ENCODE measurements at regions of chr12 and their contacts with region 1.

Region 1: DNA sequence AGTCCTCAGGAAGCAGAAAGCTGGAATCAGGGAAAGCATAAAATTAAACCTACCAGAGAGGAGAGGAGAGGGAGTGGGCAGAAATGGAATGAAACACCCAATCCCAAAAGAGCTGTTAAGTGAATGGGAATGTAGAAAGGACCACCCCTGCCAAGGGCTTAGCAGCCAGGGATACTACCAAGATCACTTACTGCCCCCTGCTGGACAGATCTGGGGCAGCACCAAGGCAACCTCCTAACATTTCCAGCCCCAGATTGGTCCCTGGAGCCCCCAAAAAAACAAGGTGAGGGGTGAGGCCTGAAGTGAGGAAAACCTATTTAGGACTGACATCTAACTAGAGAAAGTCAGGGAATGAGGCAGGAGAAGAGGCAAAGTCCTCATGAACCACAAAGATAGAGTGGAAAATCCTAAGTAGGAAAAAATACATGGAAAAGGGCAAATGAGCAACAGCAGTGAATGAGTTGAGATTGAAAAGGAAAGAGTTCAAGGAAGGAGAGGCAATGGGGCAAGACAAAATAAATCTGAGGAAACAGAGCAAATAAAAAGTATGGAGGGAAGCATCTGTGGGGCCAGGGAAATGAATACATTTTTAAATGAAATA is 11.2 kb upstream of the FKBP11 start:
- DNase-seq: peak; percentile 86 to 92
- ATAC-seq: peak; percentile 32 to 58 (median 40)
- H3K4me3 ChIP-seq: no peak overlapping the region
- H3K4me3 Mint-ChIP-seq: peak overlapping the region; percentile 40
- H3K27ac ChIP-seq: no peak overlapping the region
- H3K27ac Mint-ChIP-seq: peak overlapping the region; percentile 95 to 98
- H3K4me1 ChIP-seq: peaks cover 51% of the 10 kb centered on the region
- H3K4me1 Mint-ChIP-seq: peaks cover 45% of the 10 kb centered on the region in 2 donors
- H3K27me3 ChIP-seq: no peaks in the 10 kb centered on the region
- H3K27me3 Mint-ChIP-seq: no peaks in the 10 kb centered on the region
- CTCF ChIP-seq: peak; percentile 93

Region 2: DNA sequence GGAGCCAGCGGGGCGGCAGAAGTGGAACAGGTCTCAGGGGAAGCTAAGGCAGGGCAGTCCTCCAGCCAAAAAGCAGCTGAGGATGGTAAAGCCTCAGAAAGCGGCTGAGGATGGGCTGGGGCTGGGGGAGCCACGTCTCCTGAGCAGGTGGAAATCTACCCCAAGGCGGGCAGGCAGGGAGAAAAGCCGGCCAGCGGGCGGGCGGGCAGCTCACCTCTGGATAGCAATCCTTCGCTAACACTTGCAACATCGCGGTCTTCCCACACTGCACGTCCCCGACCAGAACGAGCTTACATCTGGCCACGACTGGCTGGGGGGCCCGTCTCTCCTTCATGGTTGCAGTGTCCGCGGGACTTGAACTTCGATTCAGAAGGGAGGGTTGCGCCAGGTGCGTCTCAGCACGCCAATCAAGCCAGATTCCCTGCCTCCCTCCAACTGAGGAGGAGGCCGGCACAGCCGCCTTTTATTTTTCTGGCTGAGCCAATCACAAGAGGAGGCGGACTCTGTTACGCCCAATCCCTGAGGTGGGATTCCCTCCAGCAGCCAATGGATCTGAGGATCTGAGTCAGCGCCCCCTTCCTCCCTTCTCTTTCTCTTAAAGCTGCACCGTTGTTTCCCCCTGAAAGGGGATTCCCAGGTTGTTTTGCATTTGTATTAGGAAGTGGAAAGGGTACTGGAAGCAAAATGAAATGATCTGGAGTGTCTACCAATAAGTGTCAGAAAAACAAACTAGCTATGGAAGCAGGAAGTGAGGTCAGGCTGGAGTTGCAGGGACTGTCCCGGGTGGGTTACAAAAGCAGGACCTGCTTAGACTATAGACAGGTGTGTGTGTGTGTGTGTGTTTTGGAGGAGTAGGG is 70.8 kb before region 1 on chr12 and contains the start of gene RND1:
- intact Hi-C with region 1: loop called (anchors 2 kb)
- DNase-seq: peak; percentile 70 to 95
- ATAC-seq: peak; percentile 94 to 97 (median 95)
- H3K4me3 ChIP-seq: peak within 1 kb of the TSS; percentile 60
- H3K4me3 Mint-ChIP-seq: peak within 1 kb of the TSS; percentile 96
- H3K27ac ChIP-seq: peak within 1 kb of the TSS; percentile 39
- H3K27ac Mint-ChIP-seq: peak within 1 kb of the TSS; percentile 80
- H3K4me1 ChIP-seq: peaks cover 24% of the 10 kb centered on the region
- H3K4me1 Mint-ChIP-seq: peaks cover 17 to 24% of the 10 kb centered on the region in 2 donors
- H3K27me3 ChIP-seq: peaks cover 22% of the 10 kb centered on the region
- H3K27me3 Mint-ChIP-seq: peaks cover 32 to 45% of the 10 kb centered on the region in 2 donors
- CTCF ChIP-seq: no peak
- total RNA-seq, gene RND1: 1.7 to 6.8 (median 5.6) TPM

Region 3: GRCh38 chr12:48917857-48918537 is 18.5 kb before region 1 on chr12:
- intact Hi-C with region 1: loop called (anchors 2 kb)
- DNase-seq: peak in 1 of 2 donors; percentile 73
- ATAC-seq: peak; percentile 71 to 87 (median 80)
- H3K4me3 ChIP-seq: peak overlapping the region; percentile 22
- H3K4me3 Mint-ChIP-seq: peak overlapping the region; percentile 93
- H3K27ac ChIP-seq: peak overlapping the region; percentile 63
- H3K27ac Mint-ChIP-seq: peak overlapping the region; percentile 91 to 95
- H3K4me1 ChIP-seq: peaks cover 30% of the 10 kb centered on the region
- H3K4me1 Mint-ChIP-seq: peaks cover 44% of the 10 kb centered on the region in 2 donors
- H3K27me3 ChIP-seq: no peaks in the 10 kb centered on the region
- H3K27me3 Mint-ChIP-seq: no peaks in the 10 kb centered on the region
- CTCF ChIP-seq: no peak

Region 4: DNA sequence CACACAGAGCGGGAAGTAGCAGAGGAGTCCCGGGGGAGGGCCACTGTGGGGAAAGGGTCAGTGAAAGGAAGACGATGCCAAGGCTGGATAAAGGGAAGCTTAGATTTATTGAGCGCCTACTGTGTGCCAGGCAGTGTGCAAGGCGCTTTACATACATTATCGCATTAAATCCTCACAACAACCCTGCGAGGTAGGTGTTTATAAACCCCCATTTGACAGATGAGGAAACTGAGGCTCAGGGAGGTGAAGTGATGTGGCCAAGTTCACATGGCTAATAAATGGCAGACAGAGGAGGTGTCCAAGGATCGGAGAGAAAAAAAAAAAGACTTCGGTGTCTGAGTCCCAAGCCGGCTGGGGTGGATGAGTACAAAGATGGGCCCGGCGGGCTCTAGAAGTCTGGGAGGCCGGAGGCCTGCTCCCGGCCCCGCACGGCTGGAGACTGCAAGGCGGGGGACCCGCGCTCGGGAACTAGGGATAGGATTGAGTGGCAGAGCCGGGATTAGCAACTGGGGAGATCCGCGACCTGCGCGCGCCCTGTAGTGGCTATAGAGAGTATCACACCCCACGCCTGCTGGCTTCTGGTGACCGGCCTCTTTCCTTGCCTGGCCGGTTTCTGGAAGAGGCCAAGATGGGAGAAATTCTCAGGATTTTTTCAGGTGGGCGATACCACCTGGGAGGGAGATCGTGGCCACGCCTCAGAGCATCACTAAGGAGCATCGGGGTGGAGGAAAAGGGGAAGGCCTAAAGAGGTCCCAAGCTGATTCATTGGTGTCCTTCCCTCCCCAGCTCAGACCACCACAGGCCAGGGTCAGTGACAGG is 58.8 kb after region 1 on chr12:
- intact Hi-C with region 1: loop called (anchors 5 kb)
- DNase-seq: peak; percentile 53 to 71
- ATAC-seq: peak; percentile 37 to 48 (median 44)
- H3K4me3 ChIP-seq: no peak overlapping the region
- H3K4me3 Mint-ChIP-seq: peak overlapping the region; percentile 79
- H3K27ac ChIP-seq: no peak overlapping the region
- H3K27ac Mint-ChIP-seq: peak overlapping the region; percentile 62 to 65
- H3K4me1 ChIP-seq: peaks cover 45% of the 10 kb centered on the region
- H3K4me1 Mint-ChIP-seq: peaks cover 28 to 42% of the 10 kb centered on the region in 2 donors
- H3K27me3 ChIP-seq: peaks cover 41% of the 10 kb centered on the region
- H3K27me3 Mint-ChIP-seq: peaks cover 23 to 59% of the 10 kb centered on the region in 2 donors
- CTCF ChIP-seq: peak; percentile 76

Region 5: DNA sequence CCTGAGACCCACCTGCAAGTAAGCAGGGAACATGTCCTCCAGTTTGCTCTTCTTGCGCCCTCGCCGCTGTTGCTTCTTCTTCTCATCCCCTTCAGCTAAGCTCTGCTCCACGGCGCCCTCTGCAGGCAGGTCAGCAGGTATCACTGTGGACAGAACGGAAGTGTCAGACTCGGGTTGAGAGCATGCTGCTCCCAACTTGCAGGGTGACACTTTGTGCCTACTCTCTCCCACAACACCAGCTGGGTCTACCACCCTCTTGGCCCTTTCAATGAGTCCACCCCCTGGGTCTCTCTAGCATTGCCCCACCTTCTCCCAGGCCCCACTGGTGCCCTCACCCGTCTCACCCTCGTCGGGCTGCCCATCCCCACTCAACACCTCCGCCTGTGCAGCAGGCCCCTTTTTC is 107.4 kb after region 1 on chr12:
- intact Hi-C with region 1: no loop called
- DNase-seq: peak; percentile 77 to 90
- ATAC-seq: peak; percentile 80 to 92 (median 83)
- H3K4me3 ChIP-seq: no peak overlapping the region
- H3K4me3 Mint-ChIP-seq: no peak overlapping the region
- H3K27ac ChIP-seq: no peak overlapping the region
- H3K27ac Mint-ChIP-seq: peak overlapping the region; percentile 81 to 82
- H3K4me1 ChIP-seq: no peaks in the 10 kb centered on the region
- H3K4me1 Mint-ChIP-seq: peaks cover 6 to 16% of the 10 kb centered on the region in 2 donors
- H3K27me3 ChIP-seq: no peaks in the 10 kb centered on the region
- H3K27me3 Mint-ChIP-seq: no peaks in the 10 kb centered on the region
- CTCF ChIP-seq: peak; percentile 75

Measured in natural killer cell (primary cell).